T-cell (primary cell): ENCODE measurements at regions of chr12 and their contacts with region 1.

Region 1: DNA sequence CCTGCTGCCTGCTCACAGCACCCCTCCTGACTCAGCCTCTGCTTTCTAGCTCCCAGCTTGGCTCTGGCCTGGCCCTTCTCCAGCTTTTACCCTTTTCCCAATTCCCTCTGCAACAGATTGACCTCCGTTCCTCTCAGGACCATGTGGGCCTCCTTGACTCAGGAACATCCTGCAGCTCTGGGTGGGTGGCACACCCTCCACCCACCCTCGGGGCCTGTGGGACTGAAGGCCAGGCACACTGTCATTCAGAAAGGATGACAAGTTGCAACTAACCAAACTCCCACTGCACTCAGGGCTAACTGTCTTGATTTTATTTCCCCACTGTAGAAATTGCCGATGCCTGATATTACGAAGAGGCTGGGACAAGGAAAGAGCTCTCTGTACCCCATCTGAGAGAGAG is 59.4 kb downstream of the HELB start:
- DNase-seq: no peak
- ATAC-seq: no peak
- H3K4me3 ChIP-seq: no peak overlapping the region
- H3K4me3 Mint-ChIP-seq: no peak overlapping the region
- H3K27ac ChIP-seq: no peak overlapping the region
- H3K27ac Mint-ChIP-seq: no peak overlapping the region
- H3K4me1 ChIP-seq: no peaks in the 10 kb centered on the region
- H3K4me1 Mint-ChIP-seq: no peaks in the 10 kb centered on the region
- H3K27me3 ChIP-seq: no peaks in the 10 kb centered on the region
- H3K27me3 Mint-ChIP-seq: no peaks in the 10 kb centered on the region

Region 2: GRCh38 chr12:66130277-66131066 is 231.2 kb before region 1 on chr12 and contains the start of gene LLPH:
- CTCF ChIA-PET with region 1: no interaction called
- POLR2A ChIA-PET with region 1: no interaction called
- DNase-seq: peak; percentile 75 to 95 (median 87)
- ATAC-seq: peak; percentile 96 to 98 (median 96)
- H3K4me3 ChIP-seq: peak within 1 kb of the TSS; percentile 80 to 98
- H3K4me3 Mint-ChIP-seq: peak within 1 kb of the TSS; percentile 84 to 99 (median 98)
- H3K27ac ChIP-seq: peak within 1 kb of the TSS; percentile 84
- H3K27ac Mint-ChIP-seq: peak within 1 kb of the TSS; percentile 96
- H3K4me1 ChIP-seq: peaks cover 14 to 17% of the 10 kb centered on the region in 2 experiments
- H3K4me1 Mint-ChIP-seq: peaks cover 62 to 68% (median 62%) of the 10 kb centered on the region in 3 donors
- H3K27me3 ChIP-seq: no peaks in the 10 kb centered on the region
- H3K27me3 Mint-ChIP-seq: no peaks in the 10 kb centered on the region
- total RNA-seq, gene LLPH: 16.6 to 24.3 (median 22.3) TPM

Region 3: GRCh38 chr12:66279123-66279712 is 82.5 kb before region 1 on chr12:
- CTCF ChIA-PET with region 1: no interaction called
- POLR2A ChIA-PET with region 1: no interaction called
- DNase-seq: peak in 30 of 35 experiments; percentile 19 to 69 (median 38)
- ATAC-seq: peak; percentile 67 to 83 (median 82)
- H3K4me3 ChIP-seq: no peak overlapping the region
- H3K4me3 Mint-ChIP-seq: peak overlapping the region in 1 of 3 donors; percentile 17
- H3K27ac ChIP-seq: no peak overlapping the region
- H3K27ac Mint-ChIP-seq: no peak overlapping the region
- H3K4me1 ChIP-seq: peaks cover 10 to 20% of the 10 kb centered on the region in 2 experiments
- H3K4me1 Mint-ChIP-seq: peaks cover 42 to 56% (median 55%) of the 10 kb centered on the region in 3 donors
- H3K27me3 ChIP-seq: no peaks in the 10 kb centered on the region
- H3K27me3 Mint-ChIP-seq: no peaks in the 10 kb centered on the region

Region 4: DNA sequence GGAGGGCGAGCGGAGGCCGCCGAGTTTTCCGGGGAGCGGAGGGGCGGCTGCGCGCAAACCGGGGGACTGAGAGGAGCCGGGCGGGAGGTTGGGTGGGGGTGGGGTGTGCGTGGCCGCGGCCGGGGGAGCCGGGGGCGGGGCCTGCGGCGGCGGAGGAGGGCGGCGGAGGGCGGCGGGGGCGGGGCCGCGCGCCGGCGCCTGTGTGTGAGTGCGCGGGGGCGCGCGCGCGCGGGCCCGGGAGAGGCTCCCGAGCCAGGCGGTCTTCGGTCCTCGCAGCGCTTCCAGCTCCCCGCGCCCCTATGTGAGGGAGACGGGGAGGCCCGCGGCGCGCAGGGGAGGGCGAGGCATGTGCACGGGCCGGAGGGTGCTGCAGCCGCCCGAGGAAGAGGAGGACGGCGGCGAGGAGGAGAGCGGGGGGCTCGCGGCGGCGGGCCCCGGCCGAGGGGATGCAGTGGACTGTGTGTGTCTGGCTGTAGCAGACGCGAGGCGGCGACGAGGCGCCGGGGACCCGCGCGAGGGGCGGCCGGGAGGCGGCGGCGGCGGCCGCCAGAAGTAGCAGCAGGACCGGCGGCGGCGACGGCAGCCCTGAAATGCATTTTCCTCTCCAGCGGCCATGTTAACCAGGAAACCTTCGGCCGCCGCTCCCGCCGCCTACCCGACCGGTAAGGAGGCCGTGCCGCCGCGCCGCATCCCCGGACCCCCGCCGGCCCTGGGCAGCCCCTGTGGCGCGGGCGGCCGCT is 1287.0 kb after region 1 on chr12 and contains the start of gene DYRK2:
- CTCF ChIA-PET with region 1: no interaction called
- POLR2A ChIA-PET with region 1: interaction called in 1 of 2 experiments, 14 read pairs
- DNase-seq: peak; percentile 57 to 91 (median 75)
- ATAC-seq: peak; percentile 64 to 67 (median 66)
- H3K4me3 ChIP-seq: peak within 1 kb of the TSS; percentile 92 to 96
- H3K4me3 Mint-ChIP-seq: peak within 1 kb of the TSS; percentile 94 to 99 (median 94)
- H3K27ac ChIP-seq: peak within 1 kb of the TSS; percentile 81
- H3K27ac Mint-ChIP-seq: peak within 1 kb of the TSS; percentile 91 to 95
- H3K4me1 ChIP-seq: peaks cover 21 to 28% of the 10 kb centered on the region in 2 experiments
- H3K4me1 Mint-ChIP-seq: peaks cover 37 to 48% (median 44%) of the 10 kb centered on the region in 3 donors
- H3K27me3 ChIP-seq: no peaks in the 10 kb centered on the region
- H3K27me3 Mint-ChIP-seq: no peaks in the 10 kb centered on the region
- total RNA-seq, gene DYRK2: 104 to 138 (median 120) TPM